Right ventricle myocardium superior (tissue), 1 donor: ENCODE measurements at regions of chr17 and their contacts with region 1.

Region 1: DNA sequence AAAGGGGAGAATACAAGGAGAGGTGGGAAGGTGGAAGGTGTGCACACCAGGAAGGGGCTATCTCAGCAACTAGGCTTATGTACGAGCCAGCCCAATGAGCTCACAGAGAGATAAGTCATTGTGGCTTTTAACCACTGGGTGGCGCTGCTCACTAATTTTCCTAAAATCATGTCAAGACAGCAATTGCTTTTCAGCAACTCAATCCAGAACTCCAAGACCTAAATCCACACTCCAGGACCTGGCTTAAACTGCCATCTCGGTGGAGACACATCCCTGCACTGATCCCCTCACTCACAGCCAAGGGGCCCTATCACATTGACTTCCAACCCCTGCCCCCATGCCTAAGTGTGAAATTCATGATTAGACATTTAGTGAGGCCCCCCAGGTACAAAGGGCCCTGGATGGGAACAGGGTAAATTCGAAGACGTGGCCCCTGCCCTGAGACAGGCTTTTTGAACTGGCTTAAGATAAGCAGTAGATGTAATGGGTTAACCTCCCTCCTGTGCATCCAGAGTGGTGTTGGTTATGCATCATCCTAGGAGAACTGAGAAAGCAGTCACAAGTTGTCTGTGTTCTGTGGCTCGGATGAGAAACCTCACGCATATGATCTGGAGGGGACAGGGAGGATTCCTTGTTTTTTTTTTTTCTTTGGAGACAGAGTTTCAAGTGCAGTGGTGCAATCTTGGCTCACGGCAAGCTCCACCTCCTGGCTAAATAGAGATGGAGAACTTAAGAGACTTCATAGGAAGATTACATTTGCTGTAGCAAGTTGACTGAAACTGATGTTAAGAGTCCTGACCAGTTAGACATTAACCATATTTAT is 11.5 kb downstream of the CCL16 start:
- DNase-seq: peak; percentile 69
- ATAC-seq: peak; percentile 85

Region 2: DNA sequence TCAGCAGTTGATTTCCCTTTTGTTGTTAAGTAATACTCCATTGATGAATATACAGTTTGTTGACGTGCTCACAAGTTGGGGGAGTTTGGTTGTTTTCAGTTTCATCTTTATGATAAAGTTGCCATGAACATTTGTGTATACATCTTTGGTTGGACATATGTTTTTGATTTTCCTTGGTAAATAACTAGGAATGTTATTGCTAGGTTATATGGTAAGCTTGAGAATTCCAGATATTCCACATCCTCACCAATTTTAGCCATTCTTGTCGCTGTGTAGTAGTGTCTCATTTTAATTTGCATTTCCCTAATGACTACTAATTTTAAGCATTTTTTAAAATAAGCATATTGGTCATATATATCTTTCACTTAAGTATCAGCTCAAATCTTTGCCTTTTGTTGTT is 293.3 kb before region 1 on chr17:
- intact Hi-C with region 1: no loop called
- DNase-seq: no peak
- ATAC-seq: no peak

Region 3: DNA sequence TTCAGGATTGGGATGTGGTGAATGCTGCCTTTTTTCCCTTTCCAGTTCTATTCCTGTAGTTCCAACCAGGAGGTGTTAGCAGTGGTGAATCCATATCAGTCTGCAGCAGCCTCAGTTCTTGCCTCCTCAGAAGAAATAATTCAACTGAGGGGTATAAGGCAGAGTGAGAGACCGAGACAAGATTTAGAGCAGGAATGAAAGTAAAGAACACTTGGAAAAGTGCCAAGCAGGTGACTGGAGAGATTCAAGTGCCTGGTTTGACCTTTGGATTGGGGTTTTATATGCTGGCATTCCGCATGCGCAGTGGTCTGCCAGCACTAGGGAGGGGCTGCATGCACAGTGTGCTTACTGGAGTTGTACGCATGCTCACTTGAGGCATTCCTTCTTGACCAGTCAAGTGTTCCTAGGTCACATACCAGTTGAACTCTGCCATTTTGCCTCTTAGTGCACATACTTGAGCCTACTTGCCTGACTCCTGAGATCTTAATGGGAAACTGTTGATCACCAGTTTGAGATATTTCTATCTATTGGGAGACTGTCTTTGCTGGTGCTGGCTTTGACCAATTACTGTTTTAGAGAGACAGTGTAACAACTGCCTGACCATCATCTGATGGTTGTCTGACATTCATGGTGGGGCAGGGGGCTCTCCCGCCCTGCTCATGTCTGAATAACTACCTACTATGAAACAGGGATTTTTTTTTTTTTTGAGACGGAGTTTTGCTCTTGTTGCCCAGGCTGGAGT is 32.3 kb after region 1 on chr17:
- intact Hi-C with region 1: no loop called
- DNase-seq: no peak
- ATAC-seq: no peak

Region 4: DNA sequence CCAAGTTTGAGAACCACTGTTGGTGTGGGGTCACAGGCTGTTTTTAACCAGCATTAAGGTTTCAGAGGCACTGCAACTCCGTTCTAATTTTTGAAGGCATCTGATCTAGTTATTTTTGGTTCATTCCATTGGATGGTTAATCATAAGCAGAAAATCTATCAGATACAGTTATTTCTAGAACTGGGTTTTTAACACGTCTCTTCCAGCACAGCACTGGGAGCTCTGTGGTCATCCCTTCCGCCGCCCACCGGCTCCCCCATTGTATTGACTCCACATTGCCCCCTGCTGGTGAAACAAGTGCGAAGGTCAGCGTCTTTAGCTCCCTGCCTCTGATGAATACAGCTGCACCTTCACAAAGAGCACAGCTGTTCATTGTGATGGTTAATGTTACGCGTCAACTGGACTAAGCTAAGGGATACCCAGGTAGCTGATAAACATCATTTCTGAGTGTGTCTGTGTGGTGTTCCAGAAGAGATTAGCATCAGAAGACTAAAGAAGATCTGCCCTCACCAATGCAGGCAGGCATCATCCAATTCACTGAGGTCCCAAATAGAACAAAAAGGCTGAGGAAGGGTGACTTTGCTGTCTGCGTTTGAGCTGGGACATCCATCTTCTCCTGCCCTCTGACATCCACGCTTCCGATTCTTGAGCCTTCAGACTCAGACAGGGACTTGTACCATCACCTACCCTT is 102.8 kb after region 1 on chr17:
- intact Hi-C with region 1: loop called (anchors 5 kb)
- DNase-seq: peak; percentile 63
- ATAC-seq: peak; percentile 49

Region 5: GRCh38 chr17:36486204-36487194 is 516.7 kb after region 1 on chr17 and contains the start of gene ZNHIT3:
- intact Hi-C with region 1: loop called (anchors 5 kb)
- DNase-seq: peak; percentile 95
- ATAC-seq: peak; percentile 95
- total RNA-seq, gene ZNHIT3: 20.0 TPM